ENCODE measurements at regions of chr2 and their contacts with region 1.

Region 1: DNA sequence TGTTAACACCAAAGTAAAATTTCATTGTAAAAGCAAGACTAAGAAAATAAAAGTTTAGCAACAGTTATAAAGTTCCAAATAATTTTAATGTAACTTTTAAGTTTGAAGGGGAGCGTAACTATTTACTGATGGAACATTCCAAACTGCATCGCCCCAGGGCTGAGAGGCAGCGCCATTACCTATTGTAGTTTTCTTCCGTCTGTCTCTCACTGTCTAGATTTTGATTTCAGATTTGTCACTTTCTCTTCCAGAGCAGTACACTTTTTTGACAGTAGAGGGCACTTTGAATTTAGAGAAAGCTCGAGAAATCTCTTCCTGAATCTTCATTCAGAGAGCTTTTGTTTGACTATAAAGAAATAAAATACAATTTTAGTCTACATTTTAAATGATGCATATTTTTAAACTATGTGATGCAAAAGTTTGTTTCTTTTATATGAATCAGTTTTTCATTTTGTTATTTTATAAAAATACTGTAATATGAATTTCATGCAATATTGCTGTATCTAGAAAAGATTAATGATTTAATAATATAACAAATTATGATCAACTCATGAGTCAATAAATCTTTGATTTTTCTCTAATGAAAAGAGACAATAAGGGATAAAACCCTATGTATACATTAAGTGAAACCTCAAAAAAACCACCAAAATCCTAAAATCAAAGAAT is 389.8 kb downstream of the FIGN start:
- DNase-seq: no peak
- ATAC-seq: no peak
- H3K4me3 Mint-ChIP-seq: no peak overlapping the region
- H3K27ac Mint-ChIP-seq: no peak overlapping the region
- H3K4me1 Mint-ChIP-seq: peaks cover 2% of the 10 kb centered on the region
- H3K27me3 Mint-ChIP-seq: peaks cover 3% of the 10 kb centered on the region

Region 2: GRCh38 chr2:163266772-163267171 is 79.3 kb before region 1 on chr2:
- CTCF ChIA-PET with region 1: no interaction called
- POLR2A ChIA-PET with region 1: no interaction called
- intact Hi-C with region 1: no loop called
- DNase-seq: no peak
- ATAC-seq: no peak
- H3K4me3 Mint-ChIP-seq: no peak overlapping the region
- H3K27ac Mint-ChIP-seq: no peak overlapping the region
- H3K4me1 Mint-ChIP-seq: no peaks in the 10 kb centered on the region
- H3K27me3 Mint-ChIP-seq: no peaks in the 10 kb centered on the region

Region 3: GRCh38 chr2:163713534-163714311 is 367.7 kb after region 1 on chr2:
- CTCF ChIA-PET with region 1: no interaction called
- POLR2A ChIA-PET with region 1: no interaction called
- intact Hi-C with region 1: no loop called
- DNase-seq: no peak
- ATAC-seq: no peak
- H3K4me3 Mint-ChIP-seq: no peak overlapping the region
- H3K27ac Mint-ChIP-seq: no peak overlapping the region
- H3K4me1 Mint-ChIP-seq: no peaks in the 10 kb centered on the region
- H3K27me3 Mint-ChIP-seq: no peaks in the 10 kb centered on the region

Region 4: GRCh38 chr2:163878531-163879117 is 532.6 kb after region 1 on chr2:
- CTCF ChIA-PET with region 1: no interaction called
- POLR2A ChIA-PET with region 1: no interaction called
- intact Hi-C with region 1: loop called in 1 of 2 experiments (anchors 10 kb)
- DNase-seq: peak; percentile 27
- ATAC-seq: no peak
- H3K4me3 Mint-ChIP-seq: no peak overlapping the region
- H3K27ac Mint-ChIP-seq: no peak overlapping the region
- H3K4me1 Mint-ChIP-seq: no peaks in the 10 kb centered on the region
- H3K27me3 Mint-ChIP-seq: peaks cover 2% of the 10 kb centered on the region

Region 5: GRCh38 chr2:164061129-164061746 is 715.2 kb after region 1 on chr2:
- CTCF ChIA-PET with region 1: no interaction called
- POLR2A ChIA-PET with region 1: no interaction called
- intact Hi-C with region 1: loop called (anchors 1 to 10 kb)
- DNase-seq: peak; percentile 14
- ATAC-seq: no peak
- H3K4me3 Mint-ChIP-seq: no peak overlapping the region
- H3K27ac Mint-ChIP-seq: no peak overlapping the region
- H3K4me1 Mint-ChIP-seq: no peaks in the 10 kb centered on the region
- H3K27me3 Mint-ChIP-seq: no peaks in the 10 kb centered on the region

Region 6: GRCh38 chr2:164430166-164430783 is 1084.2 kb after region 1 on chr2:
- CTCF ChIA-PET with region 1: no interaction called
- POLR2A ChIA-PET with region 1: no interaction called
- intact Hi-C with region 1: loop called in 1 of 2 experiments (anchors 5 kb)
- DNase-seq: peak; percentile 5
- ATAC-seq: no peak
- H3K4me3 Mint-ChIP-seq: no peak overlapping the region
- H3K27ac Mint-ChIP-seq: no peak overlapping the region
- H3K4me1 Mint-ChIP-seq: no peaks in the 10 kb centered on the region
- H3K27me3 Mint-ChIP-seq: no peaks in the 10 kb centered on the region

Region 7: DNA sequence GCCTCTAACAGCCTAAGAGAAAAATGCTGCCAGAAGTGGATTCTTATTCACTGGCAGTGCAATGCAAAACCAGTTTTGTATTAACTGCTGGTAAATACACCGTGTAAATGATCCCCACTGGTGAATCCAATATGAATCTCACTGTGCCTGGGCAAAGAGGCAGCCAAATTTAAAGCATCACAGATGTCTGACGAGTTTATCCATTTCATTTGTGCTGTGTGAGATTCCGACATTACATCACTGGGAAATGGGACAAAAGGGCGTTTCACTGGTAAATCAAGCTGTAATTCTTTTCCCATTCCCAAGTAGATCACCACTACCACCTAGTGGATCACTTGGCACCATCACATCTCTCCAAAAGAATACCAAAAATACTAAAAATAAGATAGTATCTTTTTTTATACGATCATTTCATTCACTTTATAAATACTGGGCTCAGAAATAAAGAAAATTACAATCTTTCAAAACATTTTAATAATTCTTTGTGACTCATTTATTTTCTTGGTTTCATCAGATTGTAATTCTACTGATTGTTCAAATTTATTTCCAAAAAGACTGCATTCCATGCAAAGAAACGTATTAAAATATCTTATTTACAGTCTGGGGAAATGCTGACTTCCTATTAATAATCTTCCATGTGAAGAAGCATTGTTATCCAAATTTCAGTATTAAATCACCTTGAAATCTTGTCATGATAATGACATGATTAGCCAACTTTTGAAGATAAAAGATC is 1149.6 kb after region 1 on chr2:
- CTCF ChIA-PET with region 1: no interaction called
- POLR2A ChIA-PET with region 1: no interaction called
- intact Hi-C with region 1: loop called in 1 of 2 experiments (anchors 5 kb)
- DNase-seq: no peak
- ATAC-seq: no peak
- H3K4me3 Mint-ChIP-seq: no peak overlapping the region
- H3K27ac Mint-ChIP-seq: no peak overlapping the region
- H3K4me1 Mint-ChIP-seq: no peaks in the 10 kb centered on the region
- H3K27me3 Mint-ChIP-seq: no peaks in the 10 kb centered on the region

Region 8: GRCh38 chr2:164538240-164538866 is 1192.3 kb after region 1 on chr2:
- CTCF ChIA-PET with region 1: no interaction called
- POLR2A ChIA-PET with region 1: no interaction called
- intact Hi-C with region 1: loop called in 1 of 2 experiments (anchors 5 kb)
- DNase-seq: no peak
- ATAC-seq: no peak
- H3K4me3 Mint-ChIP-seq: no peak overlapping the region
- H3K27ac Mint-ChIP-seq: no peak overlapping the region
- H3K4me1 Mint-ChIP-seq: no peaks in the 10 kb centered on the region
- H3K27me3 Mint-ChIP-seq: no peaks in the 10 kb centered on the region

Region 9: GRCh38 chr2:164717000-164717803 is 1371.2 kb after region 1 on chr2:
- CTCF ChIA-PET with region 1: no interaction called
- POLR2A ChIA-PET with region 1: no interaction called
- intact Hi-C with region 1: loop called in 1 of 2 experiments (anchors 5 kb)
- DNase-seq: no peak
- ATAC-seq: no peak
- H3K4me3 Mint-ChIP-seq: no peak overlapping the region
- H3K27ac Mint-ChIP-seq: no peak overlapping the region
- H3K4me1 Mint-ChIP-seq: no peaks in the 10 kb centered on the region
- H3K27me3 Mint-ChIP-seq: no peaks in the 10 kb centered on the region